ENCODE measurements at regions of chr2 and their contacts with region 1.

Region 1: GRCh38 chr2:202375609-202376408 is at the start of gene BMPR2:
- DNase-seq: peak; percentile 64 to 90
- H3K4me3 ChIP-seq: peak within 1 kb of the TSS; percentile 85
- H3K27ac ChIP-seq: peak within 1 kb of the TSS; percentile 77
- H3K4me1 ChIP-seq: peaks cover 22% of the 10 kb centered on the region; the same call in 1 of the 2 replicates
- H3K27me3 ChIP-seq: no peaks in the 10 kb centered on the region
- CTCF ChIP-seq: no peak
- total RNA-seq, gene BMPR2: 17.6 and 23.2 TPM in 2 replicates

Region 2: GRCh38 chr2:202317080-202317857 is 58.5 kb before region 1 on chr2:
- CTCF ChIA-PET with region 1: no interaction called
- POLR2A ChIA-PET with region 1: no interaction called
- intact Hi-C with region 1: loop called (anchors 1 kb)
- DNase-seq: peak in 1 of 2 experiments; percentile 53
- H3K4me3 ChIP-seq: no peak overlapping the region
- H3K27ac ChIP-seq: no peak overlapping the region
- H3K4me1 ChIP-seq: no peaks in the 10 kb centered on the region
- H3K27me3 ChIP-seq: no peaks in the 10 kb centered on the region
- CTCF ChIP-seq: no peak

Region 3: GRCh38 chr2:202762556-202762955 is 386.7 kb after region 1 on chr2:
- CTCF ChIA-PET with region 1: no interaction called
- POLR2A ChIA-PET with region 1: no interaction called
- intact Hi-C with region 1: no loop called
- DNase-seq: no peak
- H3K4me3 ChIP-seq: no peak overlapping the region
- H3K27ac ChIP-seq: no peak overlapping the region
- H3K4me1 ChIP-seq: no peaks in the 10 kb centered on the region
- H3K27me3 ChIP-seq: no peaks in the 10 kb centered on the region
- CTCF ChIP-seq: no peak